K562 (cell line): ENCODE measurements at regions of chrX and their contacts with region 1.

Region 1: DNA sequence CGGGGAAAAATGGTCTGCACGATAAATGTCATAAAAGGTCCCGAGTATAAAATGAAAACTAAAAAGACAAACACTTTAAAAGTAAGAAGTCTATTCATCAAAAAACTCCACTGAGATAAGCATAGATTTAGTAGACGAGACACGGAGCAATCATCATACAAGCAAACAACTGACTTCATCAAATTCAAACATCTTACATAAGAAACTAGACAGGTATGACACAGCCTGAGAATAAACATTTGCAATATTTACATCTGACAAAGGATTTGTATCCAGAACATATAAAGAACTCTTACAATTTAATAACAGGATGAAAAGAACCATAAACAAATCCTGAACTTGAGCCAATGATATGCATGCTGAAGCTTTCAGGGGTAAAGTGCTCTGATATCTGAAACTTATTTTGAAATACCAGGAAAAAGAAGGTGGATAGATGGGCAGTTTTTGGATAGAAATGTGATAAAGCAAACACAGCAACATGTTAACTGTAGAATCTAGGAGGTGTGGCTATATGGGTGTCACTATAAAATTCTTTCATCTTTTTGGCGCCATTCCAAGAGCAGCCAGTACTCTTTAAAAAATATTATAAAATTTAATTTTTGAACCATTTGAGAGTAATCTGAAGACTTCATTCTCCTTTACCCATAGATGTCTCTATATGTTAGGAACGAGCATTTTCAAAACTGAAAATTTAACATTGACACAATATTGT is 12.0 kb downstream of the MPP1 start:
- DNase-seq: no peak
- ATAC-seq: no peak
- H3K4me3 ChIP-seq: no peak overlapping the region
- H3K27ac ChIP-seq: no peak overlapping the region
- H3K4me1 ChIP-seq: peaks cover 20 to 48% of the 10 kb centered on the region in 2 experiments; a peak in 4 of 5 replicates
- H3K27me3 ChIP-seq: no peaks in the 10 kb centered on the region
- CTCF ChIP-seq: no peak
- EP300 ChIP-seq: no peak
- POLR2A ChIP-seq: no peak
- RAD21 ChIP-seq: no peak

Region 2: DNA sequence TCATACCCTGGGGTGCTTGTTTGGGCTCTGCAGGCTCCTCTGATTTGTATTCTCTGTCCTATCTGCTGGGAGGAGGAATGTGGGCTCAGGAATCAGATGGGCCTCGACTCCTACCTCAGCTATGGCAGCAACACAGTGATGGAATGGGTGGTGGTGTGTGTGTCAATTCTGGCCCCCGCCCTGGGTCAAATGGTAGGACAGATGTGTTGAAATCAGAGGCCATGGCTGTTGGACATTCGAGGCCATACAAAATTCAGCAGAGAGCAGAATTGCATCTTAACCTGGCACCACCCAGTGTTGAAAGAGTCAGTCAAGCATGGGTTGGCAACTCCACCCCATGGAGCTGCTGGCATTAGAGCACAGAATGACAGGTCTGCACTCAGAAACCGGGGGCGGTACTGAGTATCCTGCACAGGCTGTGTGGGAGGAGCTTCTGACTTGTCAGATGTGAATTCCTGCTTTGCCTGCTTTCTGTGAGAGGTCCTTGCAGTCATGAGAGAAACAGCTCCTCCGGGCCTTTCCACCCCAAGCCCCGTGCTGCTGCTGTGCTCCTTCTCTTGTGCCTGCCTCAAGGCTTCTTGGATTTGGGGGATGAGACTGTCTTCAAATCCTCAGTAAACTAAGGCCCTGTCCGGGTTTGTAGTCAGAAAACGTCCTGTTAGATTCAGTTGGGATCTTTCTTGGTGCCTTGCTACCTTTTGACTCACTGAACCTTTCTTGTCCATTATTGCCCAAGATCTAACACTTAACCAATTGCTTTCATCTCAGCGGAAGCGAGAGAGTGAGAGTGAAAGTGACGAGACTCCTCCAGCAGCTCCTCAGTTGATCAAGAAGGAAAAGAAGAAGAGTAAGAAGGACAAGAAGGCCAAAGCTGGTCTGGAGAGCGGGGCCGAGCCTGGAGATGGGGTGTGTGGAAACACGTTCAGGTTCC is 17.6 kb before region 1 on chrX:
- CTCF ChIA-PET with region 1: no interaction called
- POLR2A ChIA-PET with region 1: interaction called, 14 read pairs
- in situ Hi-C with region 1: no loop called
- intact Hi-C with region 1: no loop called
- DNase-seq: peak in 2 of 4 experiments; percentile 29 to 67
- ATAC-seq: peak; percentile 70
- H3K4me3 ChIP-seq: no peak overlapping the region
- H3K27ac ChIP-seq: 0 out of 3 replicates have a peak overlapping the region, but pooled peaks have one; percentile 48
- H3K4me1 ChIP-seq: peaks cover 0 to 12% of the 10 kb centered on the region in 2 experiments; a peak in 3 of 5 replicates
- H3K27me3 ChIP-seq: no peaks in the 10 kb centered on the region
- CTCF ChIP-seq: no peak
- EP300 ChIP-seq: no peak
- POLR2A ChIP-seq: peak; percentile 44
- RAD21 ChIP-seq: no peak

Region 3: GRCh38 chrX:154980330-154981096 is 187.3 kb after region 1 on chrX:
- CTCF ChIA-PET with region 1: no interaction called
- POLR2A ChIA-PET with region 1: no interaction called
- in situ Hi-C with region 1: no loop called
- intact Hi-C with region 1: no loop called
- DNase-seq: peak; percentile 54 to 85 (median 60)
- ATAC-seq: peak; percentile 99
- H3K4me3 ChIP-seq: peak overlapping the region; percentile 20; the same call in 1 of the 2 replicates
- H3K27ac ChIP-seq: no peak overlapping the region; the same call in 2 of the 3 replicates
- H3K4me1 ChIP-seq: no peaks in the 10 kb centered on the region; a peak in 1 of 5 replicates
- H3K27me3 ChIP-seq: no peaks in the 10 kb centered on the region
- CTCF ChIP-seq: peak; percentile 82 to 96 (median 96)
- EP300 ChIP-seq: no peak
- POLR2A ChIP-seq: no peak
- RAD21 ChIP-seq: peak; percentile 84 to 95